ENCODE measurements at regions of chr11 and their contacts with region 1.

Region 1: DNA sequence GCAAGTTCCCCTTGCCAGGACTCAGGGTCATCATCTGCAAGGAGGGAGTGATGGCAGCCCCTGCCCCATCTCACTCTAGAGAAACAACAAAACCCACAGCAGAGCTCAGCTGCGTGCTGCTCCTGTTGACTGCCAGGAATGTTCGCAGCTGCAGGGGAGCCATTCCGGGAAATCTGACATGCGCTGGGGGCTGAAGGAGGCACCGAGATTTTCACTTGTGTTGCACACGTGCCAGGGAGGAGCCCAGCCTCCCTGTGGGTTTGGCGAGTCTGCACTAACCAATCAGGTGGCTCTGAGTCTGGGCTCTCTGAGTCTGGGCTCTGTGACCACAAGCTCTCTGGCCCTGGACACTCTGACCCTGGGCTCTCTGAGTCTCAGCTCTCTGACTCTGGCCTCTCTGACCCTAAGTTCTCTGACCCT is 10.5 kb downstream of the FGF3 start:
- DNase-seq: no peak

Region 2: DNA sequence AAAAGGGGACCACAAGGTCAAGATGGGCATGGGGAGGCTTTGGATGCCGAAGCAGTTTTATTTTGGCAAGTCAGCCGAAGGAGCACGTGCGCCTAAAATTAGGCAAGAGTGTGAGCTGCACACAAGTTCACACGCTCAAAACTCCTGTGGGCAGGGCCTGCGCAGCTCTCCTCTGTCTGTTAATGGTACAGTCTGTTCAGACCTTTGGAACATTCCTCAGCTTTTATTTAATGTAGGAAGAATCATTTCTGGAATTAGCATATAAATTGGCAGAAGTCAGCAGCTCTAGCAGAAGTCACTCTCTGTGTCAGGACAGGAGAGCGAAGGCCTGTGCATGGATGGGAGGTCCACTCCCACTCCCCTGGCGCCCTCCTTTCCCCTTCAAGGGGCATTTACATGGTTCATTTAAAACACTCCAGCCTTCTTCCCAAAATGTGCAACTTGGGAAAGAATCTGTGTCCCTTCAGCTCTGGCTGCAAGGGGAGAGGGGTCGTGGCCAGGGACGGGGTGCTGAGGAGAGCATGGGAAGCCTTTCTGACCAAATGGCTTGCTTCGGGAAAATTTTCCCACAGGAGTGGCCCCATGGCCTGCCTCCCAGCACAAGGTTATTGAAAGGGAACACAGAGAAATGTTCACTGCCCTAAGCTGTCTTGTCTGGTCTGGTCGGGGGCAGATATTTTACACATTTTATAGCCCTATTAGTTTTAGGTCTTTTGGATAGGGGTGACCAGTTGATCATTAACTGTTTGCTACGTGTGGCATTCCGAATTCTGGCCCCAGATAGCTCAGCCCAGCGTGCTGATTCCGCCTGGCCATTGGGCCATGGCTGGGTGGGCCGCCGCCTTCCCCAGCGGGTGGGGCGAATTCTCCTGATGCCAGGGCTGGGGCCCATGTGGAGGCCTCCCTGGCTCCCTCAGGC is 696.8 kb before region 1 on chr11:
- intact Hi-C with region 1: loop called in 1 of 2 experiments (anchors 2 kb)
- DNase-seq: no peak

Region 3: GRCh38 chr11:69744435-69744834 is 64.2 kb before region 1 on chr11:
- intact Hi-C with region 1: no loop called
- DNase-seq: no peak

Measured in posterior vena cava (tissue), 2 donors.